ENCODE measurements at regions of chr15 and their contacts with region 1.

Region 1: GRCh38 chr15:83487519-83487918 is 40.4 kb downstream of the SH3GL3 start:
- DNase-seq: no peak
- H3K4me3 ChIP-seq: no peak overlapping the region
- H3K27ac ChIP-seq: no peak overlapping the region
- H3K4me1 ChIP-seq: no peaks in the 10 kb centered on the region
- H3K27me3 ChIP-seq: no peaks in the 10 kb centered on the region
- CTCF ChIP-seq: no peak
- POLR2A ChIP-seq: no peak

Region 2: GRCh38 chr15:83230258-83230657 is 257.3 kb before region 1 on chr15:
- intact Hi-C with region 1: no loop called
- DNase-seq: no peak
- H3K4me3 ChIP-seq: no peak overlapping the region
- H3K27ac ChIP-seq: no peak overlapping the region
- H3K4me1 ChIP-seq: no peaks in the 10 kb centered on the region
- H3K27me3 ChIP-seq: no peaks in the 10 kb centered on the region
- CTCF ChIP-seq: no peak
- POLR2A ChIP-seq: no peak

Region 3: DNA sequence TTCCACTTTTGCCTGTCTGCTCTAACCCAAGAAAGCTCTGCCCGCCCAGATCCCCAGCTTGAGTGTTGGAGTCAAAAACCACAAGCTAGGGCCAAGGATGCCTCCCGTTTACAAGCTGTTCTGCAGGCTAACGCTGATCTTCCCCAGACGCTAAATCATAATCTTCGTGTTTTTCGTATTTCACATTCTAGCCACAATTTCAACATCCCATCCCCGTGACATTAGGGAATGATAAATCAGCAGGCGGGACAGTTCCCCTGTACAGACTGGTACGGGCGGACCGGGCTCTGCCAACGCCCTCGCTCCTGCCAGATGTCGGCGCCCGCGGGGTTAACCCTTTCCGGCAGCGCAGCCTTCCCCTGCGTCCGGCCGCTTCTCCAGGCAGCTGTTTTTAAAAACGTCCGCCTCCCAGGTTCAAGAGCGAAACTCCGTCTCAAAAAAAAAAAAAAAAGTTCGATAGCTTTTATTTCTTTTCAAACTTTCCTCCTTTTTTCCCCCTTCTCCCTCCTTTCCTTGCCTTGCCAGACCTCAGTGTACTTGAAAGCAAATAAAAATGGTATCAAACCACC is 122.1 kb before region 1 on chr15:
- intact Hi-C with region 1: no loop called
- DNase-seq: peak in 3 of 7 donors; percentile 18 to 22 (median 20)
- H3K4me3 ChIP-seq: peak overlapping the region in 1 of 4 donors; percentile 47
- H3K27ac ChIP-seq: no peak overlapping the region
- H3K4me1 ChIP-seq: peaks cover 0 to 10% of the 10 kb centered on the region in 2 donors
- H3K27me3 ChIP-seq: peaks cover 7% of the 10 kb centered on the region
- CTCF ChIP-seq: no peak
- POLR2A ChIP-seq: no peak

Region 4: GRCh38 chr15:83549623-83550022 is 62.1 kb after region 1 on chr15:
- intact Hi-C with region 1: loop called in 1 of 2 experiments (anchors 10 kb)
- DNase-seq: no peak
- H3K4me3 ChIP-seq: no peak overlapping the region
- H3K27ac ChIP-seq: no peak overlapping the region
- H3K4me1 ChIP-seq: no peaks in the 10 kb centered on the region
- H3K27me3 ChIP-seq: peaks cover 3% of the 10 kb centered on the region
- CTCF ChIP-seq: no peak
- POLR2A ChIP-seq: no peak

Region 5: DNA sequence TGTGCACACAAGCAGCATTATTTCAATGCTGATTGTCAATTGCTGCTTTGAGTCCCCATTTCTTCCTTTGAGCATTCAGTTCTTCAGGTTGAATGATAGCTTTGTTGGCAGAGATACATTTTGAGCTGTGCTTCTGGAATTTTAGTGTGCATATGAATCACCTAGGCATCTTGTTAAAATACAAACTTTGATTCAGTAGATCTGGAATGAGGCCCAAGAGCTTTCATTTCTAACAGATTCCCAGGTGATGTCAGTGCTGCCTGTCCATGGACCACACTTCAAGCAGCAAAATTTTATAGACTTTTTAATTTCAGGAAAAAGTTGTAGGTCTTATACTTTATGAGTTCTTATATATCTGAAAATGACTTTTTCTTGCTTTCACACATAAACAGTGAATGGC is 297.5 kb after region 1 on chr15:
- intact Hi-C with region 1: no loop called
- DNase-seq: no peak
- H3K4me3 ChIP-seq: no peak overlapping the region
- H3K27ac ChIP-seq: no peak overlapping the region
- H3K4me1 ChIP-seq: no peaks in the 10 kb centered on the region
- H3K27me3 ChIP-seq: no peaks in the 10 kb centered on the region
- CTCF ChIP-seq: no peak
- POLR2A ChIP-seq: no peak